Activated CD4-positive, alpha-beta T cell treated with anti-CD3 and anti-CD28 coated beads for 36 hours (primary cell): ENCODE measurements at regions of chr5 and their contacts with region 1.

Region 1: DNA sequence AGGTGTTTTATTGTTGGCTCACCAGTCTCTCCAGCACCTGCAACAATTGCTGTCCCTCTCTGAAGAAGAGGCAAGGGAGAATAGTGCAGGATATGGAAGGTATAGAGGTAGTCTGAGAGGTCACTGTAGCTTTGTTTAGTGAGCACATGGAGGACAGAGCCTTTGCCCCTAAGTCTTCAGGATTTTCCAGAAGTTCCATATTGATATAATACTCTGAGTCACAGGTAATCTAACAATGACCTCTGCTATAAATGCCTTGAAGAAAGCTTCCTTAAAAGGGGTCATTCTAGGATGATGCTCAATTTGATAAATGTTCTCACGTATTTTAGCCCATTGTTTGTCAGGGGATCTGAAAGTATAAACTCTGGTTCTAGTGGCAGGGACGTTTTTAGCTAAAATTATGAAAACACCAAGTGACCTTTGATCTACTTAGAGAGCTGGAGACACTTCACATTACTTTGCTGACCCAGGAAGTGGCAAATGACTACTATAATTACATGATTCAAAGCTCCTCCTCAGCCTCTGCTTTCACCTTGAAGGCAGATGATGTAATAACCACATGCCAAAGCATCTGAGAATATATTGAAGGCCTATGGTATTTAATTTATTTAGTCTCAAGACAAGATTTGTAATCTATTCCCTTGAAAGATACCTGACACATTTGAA is 366.9 kb upstream of the NUDT12 start:
- DNase-seq: no peak
- ATAC-seq: no peak
- H3K4me3 Mint-ChIP-seq: no peak overlapping the region
- H3K27ac Mint-ChIP-seq: no peak overlapping the region
- H3K4me1 Mint-ChIP-seq: no peaks in the 10 kb centered on the region
- H3K27me3 Mint-ChIP-seq: no peaks in the 10 kb centered on the region

Region 2: DNA sequence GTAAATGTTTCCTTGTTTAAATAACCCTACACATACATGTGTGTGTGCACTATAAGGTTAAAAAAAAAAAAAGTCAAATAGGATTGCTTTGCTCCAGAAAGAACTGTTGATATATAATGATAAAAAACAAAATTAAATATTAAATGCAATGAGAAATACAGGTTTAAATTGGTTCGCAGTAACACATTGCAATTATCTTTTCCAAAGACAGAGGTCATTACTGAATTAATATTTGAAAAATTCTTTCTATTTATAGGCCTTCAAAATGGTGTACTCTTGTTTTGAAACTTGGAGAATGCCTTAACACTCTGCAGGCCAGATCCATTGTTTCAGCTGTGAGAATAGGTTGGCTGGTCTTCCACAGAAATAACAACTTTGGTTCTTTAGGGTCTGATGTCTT is 47.9 kb before region 1 on chr5:
- CTCF ChIA-PET with region 1: no interaction called
- POLR2A ChIA-PET with region 1: no interaction called
- intact Hi-C with region 1: no loop called
- DNase-seq: no peak
- ATAC-seq: no peak
- H3K4me3 Mint-ChIP-seq: no peak overlapping the region
- H3K27ac Mint-ChIP-seq: no peak overlapping the region
- H3K4me1 Mint-ChIP-seq: no peaks in the 10 kb centered on the region
- H3K27me3 Mint-ChIP-seq: no peaks in the 10 kb centered on the region

Region 3: DNA sequence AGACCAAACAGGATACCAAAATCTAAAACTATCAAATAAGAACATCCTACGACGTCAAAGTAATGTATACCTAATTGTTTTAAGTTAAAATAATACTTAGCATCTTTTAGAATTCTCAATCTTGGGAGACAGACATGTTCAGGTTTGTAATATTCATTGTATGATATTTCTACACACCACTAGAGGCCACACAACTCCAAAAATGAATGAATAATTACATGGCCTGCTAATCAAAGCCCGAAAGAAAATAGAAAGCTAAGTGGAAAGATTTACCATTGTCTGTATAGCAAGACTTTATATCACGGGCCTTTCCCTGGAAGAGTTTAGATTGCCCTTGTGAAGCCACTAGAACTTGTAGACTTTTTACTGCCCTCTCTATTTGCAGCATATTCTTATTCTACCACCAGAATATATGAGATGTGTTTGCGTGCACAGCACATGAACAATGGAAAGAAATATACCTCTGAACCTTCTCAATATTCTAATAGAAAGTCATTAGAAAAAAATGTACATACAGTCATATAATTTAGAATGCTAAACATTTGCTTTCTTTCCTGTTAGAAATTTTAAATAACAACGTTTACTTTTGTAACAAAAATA is 13.2 kb after region 1 on chr5:
- CTCF ChIA-PET with region 1: no interaction called
- POLR2A ChIA-PET with region 1: interaction called, 17 read pairs
- intact Hi-C with region 1: no loop called
- DNase-seq: no peak
- ATAC-seq: no peak
- H3K4me3 Mint-ChIP-seq: no peak overlapping the region
- H3K27ac Mint-ChIP-seq: no peak overlapping the region
- H3K4me1 Mint-ChIP-seq: no peaks in the 10 kb centered on the region
- H3K27me3 Mint-ChIP-seq: no peaks in the 10 kb centered on the region